ENCODE measurements at regions of chr9 and their contacts with region 1.

Region 1: DNA sequence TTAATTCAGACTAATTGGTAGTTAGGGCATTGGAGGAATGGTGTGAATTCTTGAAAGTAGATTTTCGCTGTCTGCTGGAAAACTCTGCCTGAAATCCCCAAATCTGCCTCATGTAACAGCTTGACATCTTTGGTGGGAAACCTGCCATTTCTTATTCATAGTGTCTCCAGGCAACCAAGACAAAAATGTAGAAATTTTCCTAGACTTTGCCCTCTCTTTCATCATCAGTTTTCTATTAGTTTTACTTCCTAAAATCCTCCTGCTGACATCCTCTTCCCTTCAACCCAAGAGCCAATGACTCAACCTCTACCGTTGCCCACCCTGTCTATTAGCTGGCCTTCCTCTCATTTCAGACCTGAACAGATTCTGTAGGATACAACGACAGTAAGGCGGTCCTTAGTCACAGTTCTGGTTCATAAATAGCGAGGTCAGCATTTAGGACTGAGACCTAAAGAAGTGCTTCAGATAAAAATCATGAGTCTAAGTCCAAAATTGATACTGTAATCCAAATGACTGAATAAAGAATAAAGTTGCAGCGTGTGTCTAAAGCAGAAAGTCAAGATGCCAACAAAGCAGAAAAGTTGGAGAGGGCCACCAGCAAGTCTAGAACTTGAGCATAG is 133.9 kb downstream of the MUSK start:
- DNase-seq: no peak
- ATAC-seq: no peak
- H3K4me3 Mint-ChIP-seq: no peak overlapping the region
- H3K27ac Mint-ChIP-seq: no peak overlapping the region
- H3K4me1 Mint-ChIP-seq: no peaks in the 10 kb centered on the region
- H3K27me3 Mint-ChIP-seq: no peaks in the 10 kb centered on the region

Region 2: DNA sequence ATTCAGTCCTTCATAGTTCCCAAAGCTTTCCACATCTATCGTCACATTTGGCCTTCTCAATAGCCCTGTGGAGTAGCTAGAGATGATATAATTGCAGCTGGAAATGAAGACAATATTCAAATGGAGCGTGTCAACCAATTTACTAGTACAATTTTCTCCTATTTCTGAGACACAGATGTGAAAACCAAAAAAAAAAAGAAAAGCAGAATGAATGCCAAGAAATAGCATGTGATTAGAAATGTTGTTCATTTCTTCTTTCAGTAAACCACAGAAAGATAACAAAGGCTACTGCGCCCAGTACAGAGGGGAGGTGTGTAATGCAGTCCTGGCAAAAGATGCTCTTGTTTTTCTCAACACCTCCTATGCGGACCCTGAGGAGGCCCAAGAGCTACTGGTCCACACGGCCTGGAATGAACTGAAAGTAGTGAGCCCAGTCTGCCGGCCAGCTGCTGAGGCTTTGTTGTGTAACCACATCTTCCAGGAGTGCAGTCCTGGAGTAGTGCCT is 34.9 kb before region 1 on chr9:
- CTCF ChIA-PET with region 1: no interaction called
- POLR2A ChIA-PET with region 1: no interaction called
- intact Hi-C with region 1: loop called in 1 of 2 experiments (anchors 5 kb)
- DNase-seq: no peak
- ATAC-seq: no peak
- H3K4me3 Mint-ChIP-seq: no peak overlapping the region
- H3K27ac Mint-ChIP-seq: no peak overlapping the region
- H3K4me1 Mint-ChIP-seq: no peaks in the 10 kb centered on the region
- H3K27me3 Mint-ChIP-seq: no peaks in the 10 kb centered on the region

Region 3: GRCh38 chr9:112447283-112447761 is 1644.8 kb after region 1 on chr9:
- CTCF ChIA-PET with region 1: no interaction called
- POLR2A ChIA-PET with region 1: no interaction called
- intact Hi-C with region 1: no loop called
- DNase-seq: no peak
- ATAC-seq: no peak
- H3K4me3 Mint-ChIP-seq: no peak overlapping the region
- H3K27ac Mint-ChIP-seq: no peak overlapping the region
- H3K4me1 Mint-ChIP-seq: no peaks in the 10 kb centered on the region
- H3K27me3 Mint-ChIP-seq: no peaks in the 10 kb centered on the region

Measured in activated CD4-positive, alpha-beta T cell treated with anti-CD3 and anti-CD28 coated beads for 36 hours (primary cell).